PC-3 (cell line): ENCODE measurements at regions of chr3 and their contacts with region 1.

Region 1: DNA sequence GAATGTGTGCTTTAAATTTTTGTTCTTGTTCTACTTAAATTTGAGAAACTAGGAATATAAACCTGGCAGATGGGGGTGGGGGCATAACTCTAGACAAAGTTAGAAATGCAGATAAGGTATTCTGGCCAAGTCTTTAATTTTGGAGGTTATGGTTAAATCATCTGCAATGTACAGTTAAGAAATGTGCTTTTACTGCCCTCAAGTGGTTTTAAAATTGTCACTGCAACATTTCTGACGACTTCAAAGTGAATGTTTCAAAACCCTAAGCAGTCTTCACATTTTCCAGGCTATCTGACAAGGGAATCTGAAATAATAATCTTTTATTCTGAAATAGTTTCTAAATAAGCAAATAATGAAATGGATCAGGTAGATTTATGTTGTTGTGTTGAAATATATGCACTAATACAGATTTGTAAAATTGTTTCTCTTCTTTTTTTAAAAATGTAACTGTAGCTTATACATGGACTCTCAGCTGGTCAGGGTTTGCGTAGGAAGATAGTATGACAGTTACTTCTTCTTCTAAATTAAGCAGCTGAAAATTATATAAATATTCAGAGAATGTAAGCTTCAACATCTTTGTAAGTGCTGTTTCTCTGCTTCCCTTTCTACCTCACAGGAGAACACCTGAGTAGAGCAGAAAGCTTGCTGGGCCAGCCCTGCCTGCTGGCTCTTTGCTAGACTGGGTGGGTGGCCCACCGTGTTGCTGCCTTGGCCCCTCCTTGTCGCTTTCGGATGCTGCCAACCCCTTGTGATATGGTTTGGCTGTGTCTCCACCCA is 45.0 kb downstream of the SUCNR1 start:
- DNase-seq: peak; percentile 79
- ATAC-seq: peak; percentile 91
- H3K4me3 ChIP-seq: no peak overlapping the region
- H3K27ac ChIP-seq: no peak overlapping the region
- H3K4me1 ChIP-seq: peaks cover 8% of the 10 kb centered on the region
- H3K27me3 ChIP-seq: no peaks in the 10 kb centered on the region
- CTCF ChIP-seq: peak; percentile 85

Region 2: DNA sequence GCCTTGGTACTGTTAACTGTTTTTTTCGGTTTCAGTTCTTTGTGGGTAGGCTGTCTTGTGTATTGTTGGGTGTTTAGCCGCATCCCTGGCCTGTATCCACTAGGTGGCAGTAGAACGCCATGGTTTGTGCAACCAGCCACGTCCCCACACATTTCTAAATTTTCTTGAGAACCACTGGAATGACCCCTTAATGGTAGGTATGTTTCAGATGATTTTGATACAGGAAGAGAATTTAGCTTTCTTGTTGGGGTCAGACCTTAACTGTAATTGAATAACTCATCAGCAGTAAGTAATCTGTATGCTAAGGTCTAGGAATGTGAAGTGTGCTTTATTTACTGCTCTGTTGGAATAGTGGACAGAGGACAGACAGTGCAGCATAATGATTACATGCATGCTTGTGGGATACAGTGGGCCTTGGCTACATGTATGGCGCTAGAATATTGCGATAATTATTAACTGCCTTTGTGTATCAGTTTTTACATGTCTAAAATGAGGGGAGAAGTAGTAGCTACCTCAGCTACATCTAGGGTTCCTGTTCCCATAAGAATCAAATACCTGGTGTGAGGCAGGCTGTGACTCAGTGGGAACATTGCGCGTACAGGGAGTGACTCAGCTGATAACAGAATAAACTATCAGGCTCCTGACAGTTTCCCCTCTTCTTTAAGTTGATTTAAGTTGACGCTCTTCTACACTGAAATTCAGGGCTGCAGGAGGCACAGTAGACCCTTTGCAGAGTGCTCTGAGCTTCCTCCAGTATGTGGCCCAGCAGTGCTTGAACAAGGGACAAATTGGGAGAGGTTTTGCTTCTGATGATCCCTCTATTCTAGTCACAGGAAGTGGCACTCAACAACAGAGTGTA is 690.4 kb before region 1 on chr3:
- CTCF ChIA-PET with region 1: no interaction called
- POLR2A ChIA-PET with region 1: no interaction called
- intact Hi-C with region 1: loop called (anchors 10 kb)
- DNase-seq: peak; percentile 81
- ATAC-seq: peak; percentile 82
- H3K4me3 ChIP-seq: no peak overlapping the region
- H3K27ac ChIP-seq: peak overlapping the region; percentile 63
- H3K4me1 ChIP-seq: peaks cover 31% of the 10 kb centered on the region
- H3K27me3 ChIP-seq: no peaks in the 10 kb centered on the region
- CTCF ChIP-seq: peak; percentile 97

Region 3: GRCh38 chr3:151468284-151468917 is 450.0 kb before region 1 on chr3:
- CTCF ChIA-PET with region 1: no interaction called
- POLR2A ChIA-PET with region 1: no interaction called
- intact Hi-C with region 1: loop called (anchors 1 kb)
- DNase-seq: peak; percentile 90
- ATAC-seq: peak; percentile 98
- H3K4me3 ChIP-seq: no peak overlapping the region
- H3K27ac ChIP-seq: no peak overlapping the region
- H3K4me1 ChIP-seq: no peaks in the 10 kb centered on the region
- H3K27me3 ChIP-seq: no peaks in the 10 kb centered on the region
- CTCF ChIP-seq: peak; percentile 93

Region 4: DNA sequence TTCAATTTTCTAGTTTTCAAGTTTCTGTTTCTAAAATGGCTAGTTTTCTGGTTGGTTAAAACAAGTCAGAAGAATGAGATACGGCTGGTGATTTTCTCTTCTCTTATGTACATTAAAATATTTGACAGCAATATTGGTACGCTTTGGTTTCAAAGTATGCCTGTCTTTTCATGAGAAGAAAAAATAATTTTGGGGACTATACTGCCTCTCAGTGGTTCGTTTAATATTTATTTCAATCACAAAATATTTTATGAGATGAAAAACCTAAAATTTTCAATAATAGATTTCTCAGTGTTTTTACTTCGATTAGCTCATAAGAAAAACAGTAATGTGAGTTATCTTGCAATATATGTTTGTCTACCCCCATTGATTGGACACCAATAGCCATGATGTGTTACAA is 257.6 kb before region 1 on chr3:
- CTCF ChIA-PET with region 1: no interaction called
- POLR2A ChIA-PET with region 1: no interaction called
- intact Hi-C with region 1: loop called (anchors 1 kb)
- DNase-seq: peak; percentile 56
- ATAC-seq: no peak
- H3K4me3 ChIP-seq: no peak overlapping the region
- H3K27ac ChIP-seq: no peak overlapping the region
- H3K4me1 ChIP-seq: no peaks in the 10 kb centered on the region
- H3K27me3 ChIP-seq: no peaks in the 10 kb centered on the region
- CTCF ChIP-seq: peak; percentile 61

Region 5: DNA sequence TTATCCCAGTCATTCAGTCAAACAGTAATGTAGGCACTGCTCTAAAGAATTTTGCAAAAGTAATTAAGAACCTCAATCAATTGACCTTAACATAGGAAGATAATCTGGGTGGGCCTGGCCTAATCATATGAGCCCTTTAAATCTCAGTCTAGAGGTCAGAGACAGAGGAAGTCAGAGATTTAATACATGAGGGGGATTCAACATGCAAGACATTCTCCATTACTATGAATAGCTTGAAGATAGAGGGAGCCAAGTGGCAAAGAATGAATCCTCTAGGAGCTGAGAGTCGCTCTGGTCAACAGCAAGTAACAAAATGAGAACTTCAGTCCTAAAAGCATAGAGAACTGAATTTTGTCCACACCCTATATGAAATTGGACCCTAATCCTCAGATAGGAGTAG is 311.3 kb after region 1 on chr3:
- CTCF ChIA-PET with region 1: no interaction called
- POLR2A ChIA-PET with region 1: no interaction called
- intact Hi-C with region 1: no loop called
- DNase-seq: no peak
- ATAC-seq: no peak
- H3K4me3 ChIP-seq: no peak overlapping the region
- H3K27ac ChIP-seq: no peak overlapping the region
- H3K4me1 ChIP-seq: no peaks in the 10 kb centered on the region
- H3K27me3 ChIP-seq: no peaks in the 10 kb centered on the region
- CTCF ChIP-seq: no peak